GM23248 (cell line): ENCODE measurements at regions of chr10 and their contacts with region 1.

Region 1: DNA sequence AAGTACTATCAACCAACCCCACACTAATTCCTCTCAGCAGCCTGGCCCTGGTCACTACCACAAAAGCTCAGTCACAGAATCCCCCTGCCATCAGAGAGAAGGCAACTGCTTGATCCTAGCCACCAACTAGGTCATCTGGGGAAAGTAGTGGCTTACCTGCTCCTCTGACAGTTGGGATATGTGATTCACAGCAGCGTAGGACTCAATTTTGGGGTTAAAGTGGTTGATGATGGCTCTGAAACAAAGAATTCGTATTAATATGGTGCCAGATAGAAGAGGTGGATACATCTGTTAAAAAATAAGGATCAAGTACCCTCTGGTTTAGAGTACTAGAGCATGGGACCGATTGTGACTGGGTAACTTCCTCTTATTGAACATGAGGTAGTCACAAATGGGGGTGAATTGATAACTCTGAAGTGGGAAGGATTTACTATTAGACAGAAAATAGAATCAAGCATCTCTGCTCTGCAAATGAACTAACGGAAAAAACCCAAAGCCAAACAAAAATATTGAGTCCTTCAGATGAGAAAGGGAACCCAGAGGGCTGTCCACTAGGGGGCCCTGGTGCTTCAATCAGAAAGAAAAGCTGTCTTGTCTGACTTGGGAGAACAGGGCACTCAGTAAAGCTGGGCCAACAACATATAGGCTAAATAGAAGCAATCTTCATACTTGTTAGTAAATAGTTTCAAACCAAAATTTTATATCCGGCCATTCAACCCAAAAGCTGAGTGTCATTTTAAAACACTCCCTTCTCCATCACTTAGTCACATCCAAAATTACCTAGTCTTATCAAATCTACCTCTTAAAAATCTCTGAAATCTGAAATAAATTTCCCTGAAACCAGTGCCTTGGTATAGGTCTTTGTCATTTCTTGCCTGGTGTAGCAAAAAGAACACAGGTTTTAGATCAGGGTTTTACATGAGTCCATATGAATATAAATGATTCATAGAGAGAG is 45.9 kb upstream of the KCNIP2 start:
- DNase-seq: peak; percentile 83
- H3K4me3 ChIP-seq: no peak overlapping the region
- H3K27ac ChIP-seq: no peak overlapping the region
- H3K4me1 ChIP-seq: no peaks in the 10 kb centered on the region
- H3K27me3 ChIP-seq: no peaks in the 10 kb centered on the region

Region 2: DNA sequence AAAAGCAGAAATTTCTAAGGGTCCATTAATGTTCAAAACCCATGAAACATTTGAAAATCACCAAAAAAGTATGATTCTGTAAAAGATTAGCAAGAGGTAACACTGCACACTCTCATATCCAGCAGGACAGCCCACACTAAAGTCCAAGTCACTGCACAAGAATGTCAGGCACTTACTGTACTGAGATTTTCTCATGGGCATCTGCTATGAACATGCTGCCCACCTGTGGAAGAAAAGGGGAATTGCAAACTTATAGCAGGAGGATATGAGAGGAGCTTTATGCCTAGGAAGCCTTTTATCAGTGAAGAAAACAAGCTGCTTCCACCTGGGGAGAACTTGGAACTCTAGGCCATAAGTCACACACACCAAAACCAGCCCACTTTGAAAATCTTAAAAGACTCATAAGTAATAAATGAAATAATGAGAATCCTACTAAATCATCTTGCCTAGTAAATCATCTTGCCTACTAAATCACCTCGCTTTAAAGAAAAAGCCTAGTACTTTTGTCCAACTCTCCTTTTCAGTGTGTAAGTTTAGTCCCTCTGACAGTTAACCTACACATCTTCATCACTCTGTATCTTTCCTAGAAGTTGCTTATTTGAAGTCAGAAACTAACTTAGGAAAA is 120.4 kb after region 1 on chr10:
- in situ Hi-C with region 1: loop called (anchors 10 kb)
- DNase-seq: peak; percentile 95
- H3K4me3 ChIP-seq: no peak overlapping the region
- H3K27ac ChIP-seq: no peak overlapping the region
- H3K4me1 ChIP-seq: peaks cover 7% of the 10 kb centered on the region
- H3K27me3 ChIP-seq: no peaks in the 10 kb centered on the region